Naive thymus-derived CD4-positive, alpha-beta T cell (primary cell): ENCODE measurements at regions of chr14 and their contacts with region 1.

Region 1: DNA sequence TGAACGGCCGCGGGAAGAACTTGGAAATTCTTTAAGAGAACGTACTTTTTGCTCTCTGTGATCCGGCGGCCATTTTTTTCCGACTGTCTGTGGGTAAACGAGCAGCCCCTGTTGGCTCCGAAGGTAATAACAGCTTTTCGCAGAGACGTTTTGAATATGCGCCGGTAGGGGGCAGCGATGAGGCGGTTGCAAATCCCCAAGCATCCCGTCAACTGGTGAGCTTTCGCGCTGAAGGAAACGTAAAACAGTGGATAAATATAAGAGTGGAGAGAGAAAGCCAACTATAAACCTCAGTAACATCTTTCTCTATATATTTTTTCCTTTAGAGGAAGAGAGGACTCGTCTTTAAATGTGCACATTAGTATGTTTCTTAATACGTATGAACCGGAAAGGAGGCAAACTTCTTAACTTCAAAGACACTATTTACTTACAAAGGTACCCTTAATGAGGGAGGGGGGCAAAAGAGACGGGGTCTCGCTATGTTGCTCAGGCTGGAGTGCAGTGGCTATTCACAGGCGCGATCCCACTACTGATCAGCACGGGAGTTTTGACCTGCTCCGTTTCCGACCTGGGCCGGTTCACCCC is 9.6 kb upstream of the NEMF start:
- DNase-seq: peak; percentile 78 to 94 (median 89)
- ATAC-seq: peak; percentile 73
- H3K4me3 ChIP-seq: peak overlapping the region; percentile 94
- H3K4me3 Mint-ChIP-seq: no peak overlapping the region
- H3K27ac ChIP-seq: peak overlapping the region; percentile 95
- H3K27ac Mint-ChIP-seq: no peak overlapping the region
- H3K4me1 ChIP-seq: peaks cover 19 to 25% of the 10 kb centered on the region in 2 donors
- H3K4me1 Mint-ChIP-seq: peaks cover 0 to 33% (median 7%) of the 10 kb centered on the region in 7 donors
- H3K27me3 ChIP-seq: no peaks in the 10 kb centered on the region
- H3K27me3 Mint-ChIP-seq: peaks cover 0 to 9% (median 0%) of the 10 kb centered on the region in 5 donors

Region 2: DNA sequence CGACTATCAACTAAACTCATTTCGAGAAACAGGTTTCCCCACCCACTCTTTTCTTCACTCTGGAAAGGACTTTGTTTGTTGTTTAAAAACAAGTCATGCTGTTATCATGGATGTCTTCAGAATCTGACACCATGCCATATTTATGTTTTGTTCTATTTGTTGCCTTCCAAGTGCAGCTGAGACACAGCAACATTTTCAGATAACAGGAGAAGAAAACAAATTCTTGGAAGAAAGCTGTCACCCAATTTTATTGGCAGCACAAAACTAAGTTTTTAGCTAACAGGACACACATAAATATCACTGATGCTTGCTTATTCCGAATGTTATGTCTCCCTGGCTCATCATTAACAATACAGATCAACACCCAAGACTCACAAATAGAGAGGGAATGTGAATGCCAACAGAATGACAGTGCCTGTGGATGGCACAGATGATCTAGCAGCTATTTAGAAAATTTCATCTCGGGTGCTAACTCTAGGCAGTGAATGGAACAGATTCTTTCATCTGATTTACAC is 423.9 kb before region 1 on chr14:
- CTCF ChIA-PET with region 1: no interaction called
- POLR2A ChIA-PET with region 1: no interaction called
- intact Hi-C with region 1: no loop called
- DNase-seq: no peak
- ATAC-seq: no peak
- H3K4me3 ChIP-seq: no peak overlapping the region
- H3K4me3 Mint-ChIP-seq: no peak overlapping the region
- H3K27ac ChIP-seq: no peak overlapping the region
- H3K27ac Mint-ChIP-seq: no peak overlapping the region
- H3K4me1 ChIP-seq: no peaks in the 10 kb centered on the region
- H3K4me1 Mint-ChIP-seq: no peaks in the 10 kb centered on the region
- H3K27me3 ChIP-seq: no peaks in the 10 kb centered on the region
- H3K27me3 Mint-ChIP-seq: peaks cover 4 to 13% (median 9%) of the 10 kb centered on the region in 5 donors

Region 3: DNA sequence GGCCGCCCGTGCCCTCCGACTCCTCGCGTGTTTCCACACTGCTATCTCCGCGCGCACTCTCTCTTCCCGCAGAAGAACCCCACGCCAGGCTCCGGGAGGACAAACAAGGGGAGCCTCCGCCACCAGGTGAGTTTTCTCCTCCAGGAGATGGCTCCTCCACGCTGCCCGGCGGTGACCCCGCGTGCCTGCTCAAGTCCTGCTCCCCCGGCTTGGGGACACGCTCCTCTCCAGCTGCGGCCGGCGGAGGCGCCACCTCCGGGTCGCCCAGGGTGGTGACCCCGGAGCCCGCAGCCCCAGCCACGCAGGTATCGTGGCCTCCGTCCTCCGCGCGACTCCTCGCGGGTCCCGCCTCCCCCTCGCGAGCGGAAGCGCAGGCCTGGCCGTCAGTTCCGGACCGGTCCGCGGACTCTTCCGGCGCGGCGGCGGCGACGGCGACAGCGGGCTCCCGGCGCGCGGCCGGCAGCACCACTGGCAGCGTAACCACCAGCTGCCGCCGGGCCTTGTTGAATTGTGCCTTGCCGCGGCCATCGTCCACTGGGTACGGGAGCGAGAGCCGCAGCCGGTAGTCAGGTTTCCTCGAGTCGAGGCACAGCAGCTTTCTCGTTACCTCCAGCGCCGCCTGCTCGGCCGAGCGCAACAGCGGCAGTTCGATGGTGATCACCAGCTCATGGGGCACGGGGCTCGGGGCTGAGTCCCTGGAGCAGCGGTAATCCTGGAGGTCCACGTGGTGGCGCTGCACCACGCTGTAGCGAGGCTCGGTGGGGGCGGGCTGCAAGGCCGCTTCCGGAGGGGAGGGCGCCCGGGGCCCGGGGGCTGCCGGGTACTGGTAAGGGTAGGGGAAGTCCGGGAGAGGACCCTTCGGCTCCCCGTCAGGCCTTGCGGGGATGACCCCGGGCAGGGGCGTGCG is 228.3 kb before region 1 on chr14:
- CTCF ChIA-PET with region 1: interaction called, 4 read pairs
- POLR2A ChIA-PET with region 1: interaction called, 14 read pairs
- intact Hi-C with region 1: loop called (anchors 1 kb)
- DNase-seq: peak; percentile 89 to 96 (median 93)
- ATAC-seq: peak; percentile 92
- H3K4me3 ChIP-seq: peak overlapping the region; percentile 99
- H3K4me3 Mint-ChIP-seq: peak overlapping the region; percentile 81 to 99 (median 96)
- H3K27ac ChIP-seq: peak overlapping the region; percentile 96
- H3K27ac Mint-ChIP-seq: peak overlapping the region; percentile 71 to 96 (median 90)
- H3K4me1 ChIP-seq: peaks cover 19 to 29% of the 10 kb centered on the region in 2 donors
- H3K4me1 Mint-ChIP-seq: peaks cover 35 to 71% (median 52%) of the 10 kb centered on the region in 7 donors
- H3K27me3 ChIP-seq: no peaks in the 10 kb centered on the region
- H3K27me3 Mint-ChIP-seq: no peaks in the 10 kb centered on the region

Region 4: GRCh38 chr14:49778421-49778820 is 83.8 kb before region 1 on chr14:
- CTCF ChIA-PET with region 1: no interaction called
- POLR2A ChIA-PET with region 1: no interaction called
- intact Hi-C with region 1: no loop called
- DNase-seq: no peak
- ATAC-seq: no peak
- H3K4me3 ChIP-seq: no peak overlapping the region
- H3K4me3 Mint-ChIP-seq: no peak overlapping the region
- H3K27ac ChIP-seq: no peak overlapping the region
- H3K27ac Mint-ChIP-seq: no peak overlapping the region
- H3K4me1 ChIP-seq: no peaks in the 10 kb centered on the region
- H3K4me1 Mint-ChIP-seq: peaks cover 5 to 26% (median 16%) of the 10 kb centered on the region in 7 donors
- H3K27me3 ChIP-seq: no peaks in the 10 kb centered on the region
- H3K27me3 Mint-ChIP-seq: no peaks in the 10 kb centered on the region

Region 5: GRCh38 chr14:49946320-49947141 is 84.3 kb after region 1 on chr14:
- CTCF ChIA-PET with region 1: interaction called, 7 read pairs
- POLR2A ChIA-PET with region 1: interaction called, 35 read pairs
- intact Hi-C with region 1: no loop called
- DNase-seq: peak in 7 of 9 donors; percentile 30 to 55 (median 43)
- ATAC-seq: peak; percentile 71
- H3K4me3 ChIP-seq: peak overlapping the region; percentile 36
- H3K4me3 Mint-ChIP-seq: peak overlapping the region; percentile 43 to 81 (median 74)
- H3K27ac ChIP-seq: peak overlapping the region; percentile 66
- H3K27ac Mint-ChIP-seq: peak overlapping the region; percentile 82 to 98 (median 94)
- H3K4me1 ChIP-seq: peaks cover 28 to 46% of the 10 kb centered on the region in 2 donors
- H3K4me1 Mint-ChIP-seq: peaks cover 26 to 86% (median 77%) of the 10 kb centered on the region in 7 donors
- H3K27me3 ChIP-seq: no peaks in the 10 kb centered on the region
- H3K27me3 Mint-ChIP-seq: no peaks in the 10 kb centered on the region

Region 6: DNA sequence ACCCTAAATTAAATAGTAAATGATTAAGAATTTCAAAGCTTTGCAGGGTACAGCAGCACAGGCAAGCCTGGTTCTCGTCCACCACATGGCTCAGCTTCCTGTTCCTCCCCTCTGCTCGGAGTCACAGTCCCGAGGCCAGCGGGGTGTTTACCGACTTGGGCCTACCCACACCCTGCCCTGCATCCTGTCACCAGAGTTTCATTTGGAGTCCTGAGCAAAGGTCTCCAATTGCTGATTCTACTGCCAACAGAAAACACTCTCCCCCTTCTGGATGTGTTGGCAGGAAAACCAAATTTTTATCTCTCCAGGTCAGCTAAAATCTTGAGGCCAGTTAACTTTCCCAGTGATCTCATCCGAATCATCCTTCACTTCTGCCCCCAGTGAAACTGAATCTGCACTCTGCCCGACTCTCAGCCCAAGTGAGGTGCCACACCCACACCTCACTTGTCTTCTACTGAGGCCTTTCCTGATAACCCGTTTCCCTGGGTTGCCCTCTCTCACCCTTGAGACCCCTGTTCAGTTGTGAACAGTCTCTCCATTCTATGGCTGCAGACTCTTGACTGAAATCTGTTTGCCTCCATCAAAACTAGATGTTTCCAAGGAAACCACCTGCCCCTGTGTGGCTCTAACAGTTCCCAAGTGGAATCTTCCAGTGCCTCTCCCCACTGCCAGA is 183.0 kb after region 1 on chr14:
- CTCF ChIA-PET with region 1: interaction called, 8 read pairs
- POLR2A ChIA-PET with region 1: interaction called, 34 read pairs
- intact Hi-C with region 1: loop called in 1 of 2 experiments (anchors 2 kb)
- DNase-seq: peak in 8 of 9 donors; percentile 39 to 74 (median 62)
- ATAC-seq: peak; percentile 86
- H3K4me3 ChIP-seq: no peak overlapping the region
- H3K4me3 Mint-ChIP-seq: peak overlapping the region; percentile 50 to 89 (median 74)
- H3K27ac ChIP-seq: peak overlapping the region; percentile 69
- H3K27ac Mint-ChIP-seq: peak overlapping the region; percentile 88 to 99 (median 96)
- H3K4me1 ChIP-seq: peaks cover 51 to 63% of the 10 kb centered on the region in 2 donors
- H3K4me1 Mint-ChIP-seq: peaks cover 49 to 83% (median 71%) of the 10 kb centered on the region in 7 donors
- H3K27me3 ChIP-seq: no peaks in the 10 kb centered on the region
- H3K27me3 Mint-ChIP-seq: no peaks in the 10 kb centered on the region

Region 7: GRCh38 chr14:50085570-50086320 is 223.6 kb after region 1 on chr14:
- CTCF ChIA-PET with region 1: interaction called, 17 read pairs
- POLR2A ChIA-PET with region 1: interaction called, 328 read pairs
- intact Hi-C with region 1: loop called (anchors 1 kb)
- DNase-seq: peak in 1 of 9 donors; percentile 45
- ATAC-seq: no peak
- H3K4me3 ChIP-seq: no peak overlapping the region
- H3K4me3 Mint-ChIP-seq: peak overlapping the region; percentile 56 to 80 (median 70)
- H3K27ac ChIP-seq: peak overlapping the region; percentile 97
- H3K27ac Mint-ChIP-seq: peak overlapping the region; percentile 86 to 97 (median 90)
- H3K4me1 ChIP-seq: peaks cover 86 to 94% of the 10 kb centered on the region in 2 donors
- H3K4me1 Mint-ChIP-seq: peaks cover 65 to 97% (median 91%) of the 10 kb centered on the region in 7 donors
- H3K27me3 ChIP-seq: no peaks in the 10 kb centered on the region
- H3K27me3 Mint-ChIP-seq: no peaks in the 10 kb centered on the region

Region 8: GRCh38 chr14:50109342-50109741 is 247.2 kb after region 1 on chr14:
- CTCF ChIA-PET with region 1: interaction called, 34 read pairs
- POLR2A ChIA-PET with region 1: interaction called, 328 read pairs
- intact Hi-C with region 1: loop called (anchors 1 kb)
- DNase-seq: no peak
- ATAC-seq: no peak
- H3K4me3 ChIP-seq: no peak overlapping the region
- H3K4me3 Mint-ChIP-seq: no peak overlapping the region
- H3K27ac ChIP-seq: no peak overlapping the region
- H3K27ac Mint-ChIP-seq: no peak overlapping the region
- H3K4me1 ChIP-seq: peaks cover under 1 to 4% of the 10 kb centered on the region in 2 donors
- H3K4me1 Mint-ChIP-seq: peaks cover 0 to 21% (median 16%) of the 10 kb centered on the region in 7 donors
- H3K27me3 ChIP-seq: no peaks in the 10 kb centered on the region
- H3K27me3 Mint-ChIP-seq: no peaks in the 10 kb centered on the region

Region 9: DNA sequence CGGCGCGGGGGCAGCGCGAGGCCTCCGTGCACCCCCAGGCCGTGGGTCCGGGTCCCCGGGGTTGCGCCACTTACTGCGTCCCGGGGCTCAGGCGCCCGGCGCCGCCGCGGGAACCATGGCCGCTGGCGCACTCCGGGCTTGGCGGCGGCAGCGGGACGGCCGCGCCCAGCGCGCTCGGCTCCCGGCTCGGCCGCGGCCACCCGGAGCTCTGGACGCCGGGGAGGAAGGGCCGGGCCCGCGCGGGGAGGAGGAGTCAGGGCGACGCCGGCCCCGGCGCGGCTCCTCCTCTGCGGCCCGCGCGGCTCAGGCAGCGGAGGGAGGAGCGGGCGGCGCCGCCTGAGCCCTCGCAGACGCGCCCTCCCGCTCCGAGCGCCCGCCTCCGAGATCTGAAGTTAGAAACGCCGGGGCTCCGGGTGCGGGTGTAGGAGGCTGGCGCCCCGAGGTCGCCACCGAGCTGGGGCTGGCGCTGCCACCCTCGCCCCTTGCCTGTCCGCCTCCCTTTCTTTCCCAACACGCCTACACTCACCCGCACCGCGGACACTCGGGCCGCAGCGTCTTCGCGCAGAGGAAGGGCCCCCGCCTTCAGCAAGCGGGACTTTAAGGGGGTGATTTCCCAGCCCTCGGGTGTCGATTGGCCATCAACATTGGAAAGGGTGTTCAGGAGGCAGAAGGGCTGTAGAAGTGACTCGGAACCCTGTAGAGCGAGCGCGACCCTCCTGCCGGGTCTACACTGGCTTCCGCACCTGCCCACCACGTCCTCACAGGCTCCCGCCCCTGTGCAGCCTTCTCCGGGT is 968.9 kb after region 1 on chr14 and contains the start of gene NIN:
- CTCF ChIA-PET with region 1: interaction called, 3 read pairs
- POLR2A ChIA-PET with region 1: interaction called, 4 read pairs
- intact Hi-C with region 1: loop called (anchors 2 to 10 kb)
- DNase-seq: peak; percentile 58 to 80 (median 74)
- ATAC-seq: peak; percentile 91
- H3K4me3 ChIP-seq: peak within 1 kb of the TSS; percentile 80
- H3K4me3 Mint-ChIP-seq: peak within 1 kb of the TSS; percentile 91 to 99 (median 96)
- H3K27ac ChIP-seq: peak within 1 kb of the TSS; percentile 84
- H3K27ac Mint-ChIP-seq: peak within 1 kb of the TSS; percentile 85 to 99 (median 95)
- H3K4me1 ChIP-seq: peaks cover 40 to 42% of the 10 kb centered on the region in 2 donors
- H3K4me1 Mint-ChIP-seq: peaks cover 46 to 84% (median 74%) of the 10 kb centered on the region in 7 donors
- H3K27me3 ChIP-seq: no peaks in the 10 kb centered on the region
- H3K27me3 Mint-ChIP-seq: peaks cover 0 to 13% (median 0%) of the 10 kb centered on the region in 5 donors
- total RNA-seq, gene NIN: 84.5 to 149 (median 128) TPM